ENCODE measurements at regions of chr11 and their contacts with region 1.

Region 1: DNA sequence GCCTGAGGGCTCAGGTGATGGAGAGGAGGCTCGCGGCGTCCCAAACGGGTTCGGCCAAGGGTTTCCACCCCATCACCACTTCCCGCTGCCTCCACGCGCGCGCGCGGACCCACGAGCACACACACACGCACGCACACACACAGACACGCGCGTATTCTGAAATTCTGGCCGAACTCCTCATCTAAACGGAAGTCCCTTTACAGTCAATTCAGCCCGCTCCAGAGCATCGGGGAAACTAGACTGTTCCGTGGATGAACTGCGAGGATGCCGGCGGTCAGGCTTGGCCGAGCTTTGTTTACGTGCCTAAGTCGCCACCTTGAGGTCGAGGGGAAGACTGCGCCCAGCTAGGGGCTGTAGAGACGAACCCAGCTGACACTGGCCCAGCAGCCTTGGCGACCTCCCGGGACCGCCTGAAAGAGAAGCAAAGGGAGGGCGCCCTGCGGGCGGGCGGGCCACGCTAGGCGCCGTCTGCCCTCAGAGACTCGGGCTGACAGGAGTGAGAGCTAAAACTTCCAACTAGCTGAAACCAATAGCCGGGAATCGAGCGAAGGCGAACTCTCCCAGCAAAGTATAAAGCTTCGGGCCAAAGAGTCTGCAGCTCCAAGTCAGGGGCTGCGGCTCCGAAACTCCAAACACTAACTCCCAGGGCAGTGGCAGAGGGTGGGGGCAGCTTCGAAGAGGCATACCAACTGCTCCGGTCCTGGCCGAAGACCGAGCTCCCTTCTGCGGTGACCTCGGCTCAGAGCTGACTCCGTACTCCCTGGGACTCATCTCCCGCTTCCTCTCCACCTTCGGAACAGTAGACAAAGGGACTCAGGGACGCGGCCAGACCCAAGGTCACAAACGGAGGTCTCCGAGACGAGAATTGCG is 124.7 kb upstream of the C11orf58 start:
- DNase-seq: peak; percentile 88 to 94 (median 91)
- ATAC-seq: peak; percentile 96 to 98 (median 97)
- H3K4me3 ChIP-seq: peak overlapping the region; percentile 21 to 69 (median 56)
- H3K27ac ChIP-seq: peak overlapping the region; percentile 49 to 90 (median 82)
- H3K4me1 ChIP-seq: peaks cover 0 to 26% (median 8%) of the 10 kb centered on the region in 12 donors
- H3K27me3 ChIP-seq: peaks cover 0 to 78% (median 5%) of the 10 kb centered on the region in 9 donors
- CTCF ChIP-seq: peak; percentile 83 to 97 (median 91)
- POLR2A ChIP-seq: no peak

Region 2: GRCh38 chr11:15650105-15650938 is 963.4 kb before region 1 on chr11:
- intact Hi-C with region 1: loop called (anchors 1 to 5 kb)
- DNase-seq: peak; percentile 95 to 98 (median 96)
- ATAC-seq: peak; percentile 97 to 100 (median 99)
- H3K4me3 ChIP-seq: peak overlapping the region in 10 of 12 donors; percentile 29 to 57 (median 44)
- H3K27ac ChIP-seq: peak overlapping the region; percentile 26 to 84 (median 76)
- H3K4me1 ChIP-seq: peaks cover 0 to 28% (median 17%) of the 10 kb centered on the region in 12 donors
- H3K27me3 ChIP-seq: peaks cover 0 to 16% (median 0%) of the 10 kb centered on the region in 9 donors
- CTCF ChIP-seq: peak; percentile 96 to 100 (median 99)
- POLR2A ChIP-seq: peak in 1 of 2 donors; percentile 13

Region 3: DNA sequence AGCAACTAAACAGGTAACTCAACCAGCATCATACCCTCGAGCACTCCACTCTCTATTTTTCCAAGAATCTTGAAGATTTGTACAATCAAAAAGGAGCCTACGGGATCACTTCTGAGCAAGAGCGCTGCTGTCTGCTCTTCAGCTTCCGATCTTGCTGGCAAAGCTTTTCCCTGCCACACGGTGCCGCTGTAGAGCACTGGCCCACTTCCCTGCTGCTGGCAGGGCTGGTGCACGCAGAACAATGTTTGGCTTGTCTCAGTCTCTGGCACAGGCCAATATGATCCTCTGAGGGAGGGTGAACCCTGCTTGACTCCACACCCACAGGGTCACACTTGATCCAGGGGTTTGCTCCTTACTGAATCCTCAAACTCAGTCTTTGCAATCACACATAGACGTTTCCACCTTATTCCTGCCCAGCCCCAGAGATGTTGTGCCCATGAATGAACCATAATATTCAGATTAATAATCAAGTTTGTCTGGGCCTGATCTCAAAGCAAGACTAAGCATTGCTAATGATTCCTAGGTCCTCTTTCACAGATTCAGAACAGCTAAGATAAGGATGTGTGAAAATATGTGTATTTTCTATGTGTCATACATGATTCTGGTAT is 794.0 kb before region 1 on chr11:
- intact Hi-C with region 1: loop called in 6 of 10 experiments (anchors 2 to 10 kb)
- DNase-seq: peak; percentile 76 to 88 (median 81)
- ATAC-seq: peak; percentile 85 to 93 (median 88)
- H3K4me3 ChIP-seq: no peak overlapping the region
- H3K27ac ChIP-seq: peak overlapping the region in 3 of 12 donors; percentile 17 to 55 (median 52)
- H3K4me1 ChIP-seq: peaks cover 0 to 53% (median 45%) of the 10 kb centered on the region in 12 donors
- H3K27me3 ChIP-seq: no peaks in the 10 kb centered on the region
- CTCF ChIP-seq: peak; percentile 85 to 96 (median 88)
- POLR2A ChIP-seq: no peak

Region 4: GRCh38 chr11:15852179-15852578 is 761.6 kb before region 1 on chr11:
- intact Hi-C with region 1: loop called in 1 of 10 experiments (anchors 10 kb)
- DNase-seq: peak in 1 of 5 donors; percentile 29
- ATAC-seq: no peak
- H3K4me3 ChIP-seq: no peak overlapping the region
- H3K27ac ChIP-seq: no peak overlapping the region
- H3K4me1 ChIP-seq: peaks cover 0 to 28% (median 13%) of the 10 kb centered on the region in 12 donors
- H3K27me3 ChIP-seq: no peaks in the 10 kb centered on the region
- CTCF ChIP-seq: peak in 11 of 12 donors; percentile 17 to 59 (median 41)
- POLR2A ChIP-seq: no peak

Region 5: DNA sequence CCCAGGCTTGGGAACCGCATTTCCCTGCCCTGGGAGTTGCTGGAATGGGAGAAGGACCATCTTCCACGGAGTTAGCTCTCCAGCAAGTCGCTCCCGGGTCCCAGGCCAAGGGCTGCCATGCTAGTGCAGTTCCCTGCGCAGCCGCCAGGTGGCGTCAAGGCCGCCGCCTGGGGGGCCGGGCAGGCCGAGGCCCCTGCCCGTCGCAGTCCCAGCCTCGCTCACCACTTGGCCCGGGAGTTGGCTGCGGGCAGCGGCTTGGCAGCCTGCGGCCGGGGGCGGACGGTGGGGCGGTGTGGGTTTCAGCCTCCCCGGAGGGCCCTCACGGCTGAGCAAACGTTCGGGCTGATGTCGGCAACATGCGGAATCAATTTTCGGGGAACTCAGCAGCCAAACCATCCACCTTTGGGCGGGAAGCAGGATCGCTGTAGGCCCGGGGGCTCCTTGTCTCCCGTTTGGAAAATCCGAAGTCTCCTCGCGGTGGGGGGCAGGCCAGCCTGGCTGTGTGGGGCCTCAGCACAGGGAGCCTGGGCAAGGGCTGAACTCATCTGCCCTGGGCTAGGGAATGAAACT is 672.5 kb before region 1 on chr11:
- intact Hi-C with region 1: loop called in 5 of 10 experiments (anchors 2 to 10 kb)
- DNase-seq: peak in 2 of 5 donors; percentile 30 to 50
- ATAC-seq: peak in 3 of 4 donors; percentile 47 to 84 (median 66)
- H3K4me3 ChIP-seq: peak overlapping the region in 1 of 12 donors; percentile 1
- H3K27ac ChIP-seq: no peak overlapping the region
- H3K4me1 ChIP-seq: peaks cover 0 to 6% (median 0%) of the 10 kb centered on the region in 12 donors
- H3K27me3 ChIP-seq: no peaks in the 10 kb centered on the region
- CTCF ChIP-seq: peak; percentile 65 to 91 (median 82)
- POLR2A ChIP-seq: no peak

Region 6: DNA sequence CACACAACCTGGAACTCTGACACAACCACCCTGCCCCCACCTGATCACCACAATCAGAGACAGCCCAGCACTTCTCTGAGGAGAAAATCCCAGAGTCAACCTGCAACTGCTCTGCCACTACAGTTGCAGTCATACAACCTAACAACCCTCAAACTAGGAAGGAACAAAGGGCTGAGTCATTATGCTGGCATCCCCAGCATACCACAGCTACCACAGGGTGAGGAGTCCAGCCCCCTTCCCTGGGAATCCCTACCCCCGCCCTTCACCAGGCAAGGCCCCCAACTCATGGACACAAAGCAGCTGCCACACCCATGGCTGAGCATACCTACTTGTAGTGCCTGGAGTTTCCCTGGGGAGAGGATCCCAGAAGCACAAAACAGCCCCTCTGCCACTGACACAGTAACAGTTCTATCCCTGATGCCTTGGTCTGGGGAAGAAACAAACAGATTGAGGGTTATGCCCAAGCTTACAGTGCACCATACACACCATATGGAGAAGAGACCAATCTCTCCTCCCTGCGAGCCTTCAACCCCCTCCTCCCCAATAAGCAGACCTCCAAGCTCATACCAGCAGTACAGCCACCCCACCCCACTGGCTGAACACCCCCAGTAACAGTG is 56.2 kb after region 1 on chr11:
- intact Hi-C with region 1: no loop called
- DNase-seq: no peak
- ATAC-seq: no peak
- H3K4me3 ChIP-seq: no peak overlapping the region
- H3K27ac ChIP-seq: no peak overlapping the region
- H3K4me1 ChIP-seq: no peaks in the 10 kb centered on the region
- H3K27me3 ChIP-seq: no peaks in the 10 kb centered on the region
- CTCF ChIP-seq: no peak
- POLR2A ChIP-seq: no peak